MCF 10A (cell line): ENCODE measurements at regions of chr11 and their contacts with region 1.

Region 1: GRCh38 chr11:93234602-93235207 is 36.9 kb upstream of the SLC36A4 start:
- DNase-seq: peak; percentile 80
- H3K4me3 Mint-ChIP-seq: no peak overlapping the region
- H3K27ac Mint-ChIP-seq: no peak overlapping the region
- H3K4me1 Mint-ChIP-seq: no peaks in the 10 kb centered on the region
- H3K27me3 Mint-ChIP-seq: peaks cover 22% of the 10 kb centered on the region
- CTCF ChIP-seq: peak; percentile 91

Region 2: DNA sequence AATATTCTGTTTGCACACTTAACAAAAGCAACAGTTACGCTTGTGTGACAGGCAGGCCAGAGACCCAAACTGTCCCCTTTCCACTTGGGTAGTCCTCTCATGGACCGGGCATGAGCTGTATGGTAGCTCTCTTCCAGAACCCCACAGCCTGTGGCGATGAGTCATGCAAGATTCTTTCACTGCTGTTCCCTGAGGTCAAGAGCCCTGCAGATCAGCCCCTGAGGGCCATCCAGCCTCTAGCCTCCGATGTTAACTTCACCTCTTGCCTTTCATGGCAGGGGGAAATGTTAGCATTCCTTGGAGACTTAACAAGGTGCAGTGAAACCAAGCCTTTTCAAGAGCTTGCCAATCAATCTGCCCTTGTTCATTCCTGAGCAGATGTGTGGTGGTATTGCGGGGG is 32.7 kb after region 1 on chr11:
- CTCF ChIA-PET with region 1: interaction called, 13 read pairs
- POLR2A ChIA-PET with region 1: no interaction called
- intact Hi-C with region 1: no loop called
- DNase-seq: peak; percentile 1
- H3K4me3 Mint-ChIP-seq: no peak overlapping the region
- H3K27ac Mint-ChIP-seq: no peak overlapping the region
- H3K4me1 Mint-ChIP-seq: no peaks in the 10 kb centered on the region
- H3K27me3 Mint-ChIP-seq: no peaks in the 10 kb centered on the region
- CTCF ChIP-seq: no peak

Region 3: DNA sequence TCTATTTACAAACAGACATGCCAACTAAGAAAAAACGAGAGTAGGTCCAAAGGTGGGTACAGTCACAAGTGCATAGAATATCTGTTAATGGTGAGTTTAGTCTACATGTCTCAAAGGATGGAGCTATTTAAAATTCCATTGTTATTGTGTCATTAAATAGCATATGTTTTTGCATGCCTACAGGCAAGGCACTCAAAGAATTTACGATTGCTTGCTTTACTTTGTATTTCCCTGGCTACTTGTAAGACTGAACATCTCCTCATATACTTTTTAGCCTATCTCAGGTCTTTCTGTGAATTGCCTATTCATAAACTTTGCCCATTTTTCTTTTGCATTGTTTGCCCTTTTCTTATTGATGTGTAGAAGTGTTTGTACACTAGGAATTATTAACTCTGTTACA is 135.6 kb after region 1 on chr11:
- CTCF ChIA-PET with region 1: no interaction called
- POLR2A ChIA-PET with region 1: no interaction called
- intact Hi-C with region 1: no loop called
- DNase-seq: peak; percentile 6
- H3K4me3 Mint-ChIP-seq: no peak overlapping the region
- H3K27ac Mint-ChIP-seq: no peak overlapping the region
- H3K4me1 Mint-ChIP-seq: peaks cover 15% of the 10 kb centered on the region
- H3K27me3 Mint-ChIP-seq: no peaks in the 10 kb centered on the region
- CTCF ChIP-seq: no peak

Region 4: GRCh38 chr11:93548679-93549319 is 314.1 kb after region 1 on chr11:
- CTCF ChIA-PET with region 1: interaction called, 94 read pairs
- POLR2A ChIA-PET with region 1: no interaction called
- intact Hi-C with region 1: loop called (anchors 1 kb)
- DNase-seq: no peak
- H3K4me3 Mint-ChIP-seq: no peak overlapping the region
- H3K27ac Mint-ChIP-seq: no peak overlapping the region
- H3K4me1 Mint-ChIP-seq: no peaks in the 10 kb centered on the region
- H3K27me3 Mint-ChIP-seq: peaks cover 11% of the 10 kb centered on the region
- CTCF ChIP-seq: no peak

Region 5: DNA sequence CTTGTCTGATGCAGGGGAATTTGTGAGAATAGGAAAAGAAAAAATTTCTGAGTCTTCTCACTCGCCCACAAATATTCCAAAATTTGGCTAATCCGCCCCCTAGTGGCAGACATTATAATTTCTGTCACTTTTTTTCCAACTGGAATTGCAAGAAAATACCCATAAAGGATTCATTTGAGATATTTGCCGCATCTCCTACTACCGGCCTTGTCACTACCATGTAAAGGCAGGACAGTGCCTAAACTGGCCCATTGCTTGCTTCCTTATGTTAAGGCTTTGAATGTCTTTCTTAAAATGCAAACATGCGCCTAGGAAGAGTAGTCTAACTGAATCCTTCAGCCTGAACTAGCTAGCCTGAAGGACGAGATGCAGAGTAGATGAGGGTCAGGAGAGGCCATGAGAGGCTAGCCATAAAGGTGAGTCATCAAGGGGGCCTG is 417.5 kb after region 1 on chr11:
- CTCF ChIA-PET with region 1: interaction called, 226 read pairs
- POLR2A ChIA-PET with region 1: interaction called, 5 read pairs
- intact Hi-C with region 1: loop called (anchors 1 kb)
- DNase-seq: peak; percentile 64
- H3K4me3 Mint-ChIP-seq: no peak overlapping the region
- H3K27ac Mint-ChIP-seq: no peak overlapping the region
- H3K4me1 Mint-ChIP-seq: peaks cover 6% of the 10 kb centered on the region
- H3K27me3 Mint-ChIP-seq: peaks cover 50% of the 10 kb centered on the region
- CTCF ChIP-seq: peak; percentile 59

Region 6: DNA sequence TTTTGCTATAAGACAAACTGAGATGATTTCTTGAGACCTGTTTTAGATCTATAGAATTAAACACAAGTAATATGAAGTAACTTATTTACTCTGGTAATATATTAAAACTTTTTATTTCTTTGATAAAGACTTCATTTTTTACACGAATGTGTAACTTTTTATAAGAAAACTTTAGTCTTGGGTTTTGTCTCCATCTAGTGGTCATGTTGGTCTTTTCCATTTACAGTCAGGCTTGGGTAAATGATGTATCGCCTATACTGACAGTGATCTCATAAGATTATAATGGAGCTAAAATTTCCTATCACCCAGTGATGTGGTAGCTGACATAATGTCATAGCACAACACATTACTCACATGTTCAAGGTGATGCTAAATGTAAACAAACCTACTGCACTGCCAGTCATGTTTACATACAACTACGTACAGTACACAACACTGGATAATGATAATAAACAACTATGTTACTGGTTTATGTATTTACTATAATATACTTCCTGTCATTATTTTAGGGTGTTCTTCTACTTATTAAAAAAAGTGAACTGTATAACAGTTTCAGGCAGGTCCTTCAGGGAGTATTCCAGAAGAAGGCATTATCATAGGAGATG is 1270.1 kb after region 1 on chr11:
- CTCF ChIA-PET with region 1: interaction called, 3 read pairs
- POLR2A ChIA-PET with region 1: no interaction called
- intact Hi-C with region 1: loop called (anchors 5 kb)
- DNase-seq: peak; percentile 61
- H3K4me3 Mint-ChIP-seq: no peak overlapping the region
- H3K27ac Mint-ChIP-seq: no peak overlapping the region
- H3K4me1 Mint-ChIP-seq: no peaks in the 10 kb centered on the region
- H3K27me3 Mint-ChIP-seq: no peaks in the 10 kb centered on the region
- CTCF ChIP-seq: peak; percentile 34